Naive thymus-derived CD8-positive, alpha-beta T cell (primary cell): ENCODE measurements at regions of chrX and their contacts with region 1.

Region 1: DNA sequence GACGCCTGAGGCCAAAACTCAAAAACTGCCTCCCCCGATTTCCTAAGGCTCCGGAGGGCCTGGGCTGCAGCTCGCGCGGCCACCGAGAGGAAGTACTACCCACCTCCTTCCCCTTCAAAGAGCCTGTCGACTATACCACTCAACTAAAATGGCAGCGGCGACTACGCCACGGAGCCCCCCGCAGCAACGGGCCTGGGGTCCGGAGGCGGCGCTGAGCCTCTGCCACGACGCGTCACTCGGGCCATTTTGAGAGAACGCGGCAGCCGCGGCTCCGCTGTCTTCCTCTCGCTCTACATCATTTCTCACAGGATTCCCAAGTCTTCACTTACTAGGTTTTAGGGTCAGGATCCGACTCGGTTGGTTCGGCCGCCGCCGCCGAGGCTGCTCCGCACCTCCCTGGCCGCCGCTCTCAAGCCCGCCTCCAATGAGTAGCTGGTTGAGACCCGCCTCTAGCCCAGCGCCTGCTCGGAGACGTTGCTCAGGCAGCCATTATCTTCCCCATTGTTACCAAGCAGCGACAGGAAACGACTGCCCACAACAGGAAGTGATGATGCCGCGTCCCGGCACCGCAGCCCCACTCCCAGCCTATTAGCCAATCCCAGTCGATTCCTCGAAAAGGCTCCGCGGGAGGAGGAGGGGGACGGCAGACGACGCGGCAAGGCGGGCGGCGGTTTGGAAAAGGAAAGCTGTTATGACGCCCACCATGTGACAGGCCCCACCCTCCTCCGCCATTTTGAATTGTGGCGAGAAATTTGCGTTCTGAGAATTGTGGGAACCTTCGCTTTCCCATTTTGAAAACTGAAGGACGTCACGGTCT is at the start of gene RLIM:
- DNase-seq: peak; percentile 75 to 97 (median 92)
- ATAC-seq: peak; percentile 89 to 90
- H3K4me3 Mint-ChIP-seq: peak within 1 kb of the TSS; percentile 96 to 100 (median 98)
- H3K27ac Mint-ChIP-seq: peak within 1 kb of the TSS; percentile 99 to 100 (median 100)
- H3K4me1 Mint-ChIP-seq: peaks cover 4 to 28% (median 13%) of the 10 kb centered on the region in 4 donors
- H3K27me3 Mint-ChIP-seq: no peaks in the 10 kb centered on the region
- polyA plus RNA-seq, gene RLIM: 6.2 to 6.6 (median 6.3) TPM

Region 2: GRCh38 chrX:74506317-74507115 is 107.8 kb before region 1 on chrX:
- POLR2A ChIA-PET with region 1: no interaction called
- DNase-seq: no peak
- ATAC-seq: no peak
- H3K4me3 Mint-ChIP-seq: no peak overlapping the region
- H3K27ac Mint-ChIP-seq: no peak overlapping the region
- H3K4me1 Mint-ChIP-seq: no peaks in the 10 kb centered on the region
- H3K27me3 Mint-ChIP-seq: peaks cover 0 to 3% (median 0%) of the 10 kb centered on the region in 5 donors

Region 3: GRCh38 chrX:74557378-74557777 is 56.9 kb before region 1 on chrX:
- POLR2A ChIA-PET with region 1: no interaction called
- DNase-seq: no peak
- ATAC-seq: no peak
- H3K4me3 Mint-ChIP-seq: no peak overlapping the region
- H3K27ac Mint-ChIP-seq: no peak overlapping the region
- H3K4me1 Mint-ChIP-seq: peaks cover 0 to 3% (median 0%) of the 10 kb centered on the region in 4 donors
- H3K27me3 Mint-ChIP-seq: no peaks in the 10 kb centered on the region

Region 4: DNA sequence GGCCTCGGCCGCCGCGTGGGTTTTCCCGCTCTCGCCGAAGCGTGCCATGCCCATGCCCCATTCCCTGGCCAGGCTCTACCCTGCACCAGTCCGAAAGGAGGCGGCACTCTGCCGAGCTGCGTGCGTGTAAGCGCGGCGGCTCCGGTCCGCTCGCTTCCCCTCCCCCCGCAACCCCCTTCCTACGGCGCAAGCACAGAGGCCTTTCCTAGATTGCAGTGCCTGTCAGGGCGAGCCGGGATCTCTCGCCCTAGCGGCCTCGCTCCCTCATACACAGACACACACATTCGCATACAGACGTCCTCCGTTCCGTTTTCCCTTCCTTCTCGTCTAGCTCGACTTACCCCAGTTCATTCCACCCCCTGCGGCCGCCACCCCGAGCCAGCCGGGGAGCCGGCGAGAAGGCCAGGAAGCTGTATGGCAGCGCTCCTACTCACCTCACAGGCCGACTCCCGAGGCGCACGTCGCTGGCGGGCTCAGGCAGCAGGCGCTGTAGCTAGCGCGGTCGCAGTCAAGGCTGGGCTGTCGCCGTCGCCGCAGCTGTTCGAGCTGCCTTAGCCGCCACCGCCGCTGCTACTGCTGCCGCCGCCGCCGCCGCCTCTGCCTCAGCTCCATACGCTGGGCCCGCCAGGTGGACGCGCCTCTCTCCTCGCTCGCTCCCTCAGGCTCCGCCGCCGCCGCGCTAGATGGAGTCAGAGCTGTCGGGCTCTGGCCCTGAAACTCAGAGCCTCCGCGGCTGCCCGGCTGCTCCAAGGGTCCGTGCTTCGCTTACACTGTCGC is 310.3 kb after region 1 on chrX:
- POLR2A ChIA-PET with region 1: interaction called, 11 read pairs
- DNase-seq: peak; percentile 4 to 59 (median 26)
- ATAC-seq: peak; percentile 67 to 79
- H3K4me3 Mint-ChIP-seq: peak overlapping the region; percentile 88 to 97 (median 94)
- H3K27ac Mint-ChIP-seq: peak overlapping the region; percentile 66 to 94 (median 92)
- H3K4me1 Mint-ChIP-seq: peaks cover 0 to 9% (median 4%) of the 10 kb centered on the region in 4 donors
- H3K27me3 Mint-ChIP-seq: peaks cover 0 to 14% (median 3%) of the 10 kb centered on the region in 5 donors